CD14-positive monocyte (primary cell): ENCODE measurements at regions of chr9 and their contacts with region 1.

Region 1: GRCh38 chr9:69421908-69422801 is 97.1 kb downstream of the ENTREP1 start:
- DNase-seq: peak; percentile 25 to 49 (median 45)
- H3K4me3 ChIP-seq: no peak overlapping the region
- H3K4me3 Mint-ChIP-seq: no peak overlapping the region
- H3K27ac ChIP-seq: no peak overlapping the region
- H3K27ac Mint-ChIP-seq: no peak overlapping the region
- H3K4me1 ChIP-seq: no peaks in the 10 kb centered on the region
- H3K4me1 Mint-ChIP-seq: no peaks in the 10 kb centered on the region
- H3K27me3 ChIP-seq: peaks cover 0 to 3% of the 10 kb centered on the region in 2 donors
- H3K27me3 Mint-ChIP-seq: peaks cover 0 to 2% (median 1%) of the 10 kb centered on the region in 3 donors
- CTCF ChIP-seq: peak; percentile 78

Region 2: GRCh38 chr9:69346998-69347397 is 75.2 kb before region 1 on chr9:
- intact Hi-C with region 1: no loop called
- DNase-seq: no peak
- H3K4me3 ChIP-seq: no peak overlapping the region
- H3K4me3 Mint-ChIP-seq: no peak overlapping the region
- H3K27ac ChIP-seq: no peak overlapping the region
- H3K27ac Mint-ChIP-seq: no peak overlapping the region
- H3K4me1 ChIP-seq: no peaks in the 10 kb centered on the region
- H3K4me1 Mint-ChIP-seq: peaks cover 3% of the 10 kb centered on the region
- H3K27me3 ChIP-seq: no peaks in the 10 kb centered on the region
- H3K27me3 Mint-ChIP-seq: peaks cover 0 to 2% (median 0%) of the 10 kb centered on the region in 3 donors
- CTCF ChIP-seq: no peak

Region 3: GRCh38 chr9:69877854-69878514 is 455.8 kb after region 1 on chr9:
- intact Hi-C with region 1: loop called in 1 of 2 experiments (anchors 5 kb)
- DNase-seq: peak in 1 of 3 donors; percentile 4
- H3K4me3 ChIP-seq: no peak overlapping the region
- H3K4me3 Mint-ChIP-seq: no peak overlapping the region
- H3K27ac ChIP-seq: no peak overlapping the region
- H3K27ac Mint-ChIP-seq: no peak overlapping the region
- H3K4me1 ChIP-seq: no peaks in the 10 kb centered on the region
- H3K4me1 Mint-ChIP-seq: peaks cover 10% of the 10 kb centered on the region
- H3K27me3 ChIP-seq: no peaks in the 10 kb centered on the region
- H3K27me3 Mint-ChIP-seq: peaks cover 5% of the 10 kb centered on the region in 3 donors
- CTCF ChIP-seq: peak; percentile 59

Region 4: GRCh38 chr9:70111042-70111602 is 689.0 kb after region 1 on chr9:
- intact Hi-C with region 1: loop called (anchors 5 kb)
- DNase-seq: peak; percentile 39 to 67 (median 63)
- H3K4me3 ChIP-seq: no peak overlapping the region
- H3K4me3 Mint-ChIP-seq: no peak overlapping the region
- H3K27ac ChIP-seq: no peak overlapping the region
- H3K27ac Mint-ChIP-seq: no peak overlapping the region
- H3K4me1 ChIP-seq: no peaks in the 10 kb centered on the region
- H3K4me1 Mint-ChIP-seq: peaks cover 2% of the 10 kb centered on the region
- H3K27me3 ChIP-seq: no peaks in the 10 kb centered on the region
- H3K27me3 Mint-ChIP-seq: peaks cover 0 to 3% (median 2%) of the 10 kb centered on the region in 3 donors
- CTCF ChIP-seq: peak; percentile 99